ENCODE measurements at regions of chr2 and their contacts with region 1.

Region 1: GRCh38 chr2:38835015-38835601 is 40.6 kb downstream of the DHX57 start:
- DNase-seq: no peak
- H3K4me3 ChIP-seq: no peak overlapping the region
- CTCF ChIP-seq: no peak

Region 2: DNA sequence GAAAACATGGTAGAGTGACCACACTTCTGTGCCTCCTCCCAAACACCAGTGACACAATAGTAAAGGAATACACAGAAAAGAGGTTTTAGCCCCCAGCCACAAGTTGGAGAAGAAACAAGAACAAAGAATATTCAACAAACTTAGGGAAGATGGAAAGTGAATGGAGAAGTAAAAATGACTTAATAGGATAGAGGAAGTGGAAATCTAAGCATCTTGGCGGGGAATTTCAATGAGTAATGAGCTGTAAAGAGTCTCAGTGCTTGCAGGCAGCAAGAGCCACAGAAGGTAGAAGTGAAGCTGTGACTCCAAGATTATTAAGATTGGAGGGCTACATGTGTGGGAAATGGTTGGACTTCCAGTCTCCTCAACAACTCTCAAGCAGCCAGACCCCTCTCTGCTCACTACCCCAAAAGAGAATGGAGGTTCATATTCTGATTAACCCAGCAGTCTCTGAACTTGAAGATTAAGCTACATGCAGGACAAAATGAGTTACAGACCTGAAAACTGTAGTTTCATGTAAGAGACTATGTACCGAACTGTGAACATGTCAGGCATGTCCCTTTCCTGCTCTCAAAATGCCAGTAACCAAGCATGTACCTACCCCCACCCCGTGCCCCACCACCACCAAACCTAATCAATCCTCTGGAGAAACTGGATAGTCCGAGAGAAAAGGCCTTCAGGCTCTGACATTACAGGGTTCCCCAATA is 215.5 kb before region 1 on chr2:
- CTCF ChIA-PET with region 1: no interaction called
- POLR2A ChIA-PET with region 1: no interaction called
- DNase-seq: no peak
- H3K4me3 ChIP-seq: no peak overlapping the region
- CTCF ChIP-seq: no peak

Region 3: DNA sequence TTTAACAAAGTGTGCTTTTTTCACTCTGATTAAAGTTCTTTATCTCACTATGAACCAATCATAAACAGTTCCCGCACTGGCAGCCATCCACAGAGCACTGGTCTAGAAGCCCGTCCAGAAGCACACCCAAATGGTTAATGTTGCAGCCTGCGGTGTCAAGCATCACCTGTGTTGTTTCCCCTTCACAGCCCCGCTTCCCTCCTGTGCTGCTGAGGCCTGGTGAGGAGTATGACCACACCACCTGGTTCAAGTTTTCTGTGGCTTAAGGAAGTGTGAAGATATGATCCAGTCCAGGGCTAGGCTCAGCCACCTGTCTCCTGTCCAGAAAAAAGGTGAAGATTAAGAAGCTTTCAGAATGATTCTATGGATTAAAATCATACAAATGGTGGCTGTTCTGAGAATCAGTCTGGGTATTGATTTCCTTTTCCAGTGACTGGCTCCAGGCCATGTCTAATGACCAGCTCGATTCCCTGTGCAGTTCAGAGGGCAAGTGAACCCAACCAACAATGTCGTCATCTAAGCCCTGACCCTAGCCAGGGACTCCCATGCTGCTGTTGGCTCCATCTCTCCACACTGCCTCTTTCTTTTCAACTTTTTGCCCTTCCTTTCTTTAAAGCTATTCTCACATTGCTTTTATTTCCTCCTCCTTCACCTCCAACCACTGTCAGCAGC is 101.7 kb before region 1 on chr2:
- CTCF ChIA-PET with region 1: no interaction called
- POLR2A ChIA-PET with region 1: no interaction called
- DNase-seq: no peak
- H3K4me3 ChIP-seq: no peak overlapping the region
- CTCF ChIP-seq: no peak

Region 4: DNA sequence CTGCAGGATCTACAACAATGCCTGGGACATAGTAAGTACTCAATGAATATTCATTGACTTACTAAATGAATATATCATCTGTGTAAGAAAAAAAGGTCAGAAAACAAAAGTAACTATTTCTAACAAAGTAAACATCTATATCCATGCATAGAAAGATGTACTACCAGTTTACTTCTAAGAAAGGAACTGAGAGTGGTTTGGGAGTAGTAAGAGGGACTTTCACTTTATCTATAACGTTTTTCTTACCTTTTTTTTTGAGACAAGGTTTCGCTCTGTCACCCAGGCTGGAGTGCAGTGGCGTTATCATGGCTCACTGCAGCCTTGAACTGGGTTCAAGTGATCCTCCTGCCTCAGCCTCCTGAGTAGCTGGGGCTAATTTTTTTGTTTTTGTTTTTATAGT is 14.9 kb after region 1 on chr2:
- CTCF ChIA-PET with region 1: interaction called, 21 read pairs
- POLR2A ChIA-PET with region 1: no interaction called
- DNase-seq: no peak
- H3K4me3 ChIP-seq: no peak overlapping the region
- CTCF ChIP-seq: no peak

Region 5: DNA sequence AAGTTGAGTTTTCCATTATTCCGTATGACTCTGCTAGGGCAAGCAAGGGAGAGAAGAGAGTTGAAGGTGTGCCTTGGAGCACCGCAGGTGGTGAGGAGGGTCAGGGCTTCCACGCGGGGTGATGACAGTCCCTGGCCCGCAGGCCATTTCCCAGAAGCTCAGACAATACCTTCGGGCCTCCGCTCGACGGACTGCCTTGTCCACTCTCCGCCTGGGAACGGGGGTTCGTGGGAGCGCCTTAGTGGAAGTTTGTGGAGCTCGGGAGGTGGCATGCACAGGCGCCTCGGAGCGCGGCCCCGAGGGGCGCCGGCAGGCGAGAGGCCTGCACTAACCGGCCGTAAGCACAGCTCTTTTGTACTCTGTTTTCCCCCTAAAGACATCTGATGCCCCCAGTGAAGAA is 124.4 kb after region 1 on chr2:
- CTCF ChIA-PET with region 1: no interaction called
- POLR2A ChIA-PET with region 1: no interaction called
- DNase-seq: no peak
- H3K4me3 ChIP-seq: peak overlapping the region; percentile 53; the same call in 1 of the 2 replicates
- CTCF ChIP-seq: no peak